ENCODE measurements at regions of chr13 and their contacts with region 1.

Region 1: DNA sequence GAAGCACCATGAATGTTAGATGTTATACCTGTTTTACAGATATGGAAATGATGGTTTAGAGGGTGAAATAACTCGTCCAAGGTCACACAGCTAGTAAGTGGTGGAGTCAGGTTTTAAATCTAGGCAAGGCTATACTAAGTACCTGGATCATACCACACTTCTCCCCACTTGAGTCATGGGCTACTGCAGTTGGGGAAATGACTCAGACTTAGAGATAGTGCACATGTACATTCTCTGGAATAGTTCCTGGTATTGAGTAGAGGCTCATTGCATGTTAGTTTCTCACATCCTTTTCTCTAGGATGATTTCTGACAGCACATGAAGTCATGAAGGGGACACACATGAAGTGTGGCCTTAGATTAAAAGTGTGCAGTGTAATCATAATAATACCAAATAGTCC is 76.2 kb upstream of the TNFSF11 start:
- DNase-seq: peak; percentile 12
- H3K4me3 Mint-ChIP-seq: no peak overlapping the region
- H3K27ac Mint-ChIP-seq: peak overlapping the region; percentile 86
- H3K4me1 Mint-ChIP-seq: peaks cover 54% of the 10 kb centered on the region
- H3K27me3 Mint-ChIP-seq: no peaks in the 10 kb centered on the region

Region 2: DNA sequence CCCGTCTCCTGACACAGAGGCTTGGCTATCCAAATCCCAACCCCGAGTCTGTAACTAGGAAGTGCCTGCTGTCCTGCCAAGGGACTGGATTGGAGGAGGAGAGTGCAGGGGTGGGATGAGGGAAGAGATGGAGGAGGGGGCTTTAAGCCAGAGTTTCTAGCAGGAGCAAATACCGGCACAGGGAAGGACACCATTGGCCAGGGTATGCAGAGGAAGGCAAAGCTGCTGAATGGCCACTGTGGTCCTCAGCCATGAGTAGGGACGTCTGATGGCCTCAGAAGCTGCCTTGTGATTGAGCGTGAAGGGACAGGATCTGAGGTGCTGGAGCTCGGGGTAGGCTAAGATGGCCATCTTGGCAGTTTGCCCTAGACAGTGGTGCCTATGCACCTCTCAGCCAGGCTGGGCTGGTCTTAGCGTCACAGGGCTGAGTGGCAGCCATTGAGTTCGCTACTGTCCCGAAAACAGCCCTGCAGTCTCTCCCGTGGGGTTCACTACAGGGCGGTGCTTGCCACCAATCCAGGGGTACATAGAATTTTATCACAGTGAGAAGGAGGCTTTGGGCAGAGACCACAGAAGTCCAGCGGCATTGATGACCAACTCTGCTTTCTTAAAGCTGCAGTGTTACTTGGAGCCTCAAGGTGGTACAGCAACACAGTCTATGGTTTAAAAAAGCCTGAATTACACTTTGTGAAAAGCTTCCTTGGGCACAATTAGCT is 164.0 kb before region 1 on chr13:
- intact Hi-C with region 1: loop called (anchors 1 kb)
- DNase-seq: no peak
- H3K4me3 Mint-ChIP-seq: no peak overlapping the region
- H3K27ac Mint-ChIP-seq: peak overlapping the region; percentile 6
- H3K4me1 Mint-ChIP-seq: peaks cover 51% of the 10 kb centered on the region
- H3K27me3 Mint-ChIP-seq: no peaks in the 10 kb centered on the region

Region 3: GRCh38 chr13:42377640-42378382 is 120.0 kb before region 1 on chr13:
- intact Hi-C with region 1: loop called (anchors 1 kb)
- DNase-seq: peak; percentile 68
- H3K4me3 Mint-ChIP-seq: peak overlapping the region; percentile 38
- H3K27ac Mint-ChIP-seq: peak overlapping the region; percentile 89
- H3K4me1 Mint-ChIP-seq: peaks cover 82% of the 10 kb centered on the region
- H3K27me3 Mint-ChIP-seq: no peaks in the 10 kb centered on the region

Region 4: GRCh38 chr13:42405665-42406390 is 92.0 kb before region 1 on chr13:
- intact Hi-C with region 1: loop called (anchors 1 kb)
- DNase-seq: no peak
- H3K4me3 Mint-ChIP-seq: peak overlapping the region; percentile 60
- H3K27ac Mint-ChIP-seq: peak overlapping the region; percentile 96
- H3K4me1 Mint-ChIP-seq: peaks cover 60% of the 10 kb centered on the region
- H3K27me3 Mint-ChIP-seq: no peaks in the 10 kb centered on the region

Region 5: DNA sequence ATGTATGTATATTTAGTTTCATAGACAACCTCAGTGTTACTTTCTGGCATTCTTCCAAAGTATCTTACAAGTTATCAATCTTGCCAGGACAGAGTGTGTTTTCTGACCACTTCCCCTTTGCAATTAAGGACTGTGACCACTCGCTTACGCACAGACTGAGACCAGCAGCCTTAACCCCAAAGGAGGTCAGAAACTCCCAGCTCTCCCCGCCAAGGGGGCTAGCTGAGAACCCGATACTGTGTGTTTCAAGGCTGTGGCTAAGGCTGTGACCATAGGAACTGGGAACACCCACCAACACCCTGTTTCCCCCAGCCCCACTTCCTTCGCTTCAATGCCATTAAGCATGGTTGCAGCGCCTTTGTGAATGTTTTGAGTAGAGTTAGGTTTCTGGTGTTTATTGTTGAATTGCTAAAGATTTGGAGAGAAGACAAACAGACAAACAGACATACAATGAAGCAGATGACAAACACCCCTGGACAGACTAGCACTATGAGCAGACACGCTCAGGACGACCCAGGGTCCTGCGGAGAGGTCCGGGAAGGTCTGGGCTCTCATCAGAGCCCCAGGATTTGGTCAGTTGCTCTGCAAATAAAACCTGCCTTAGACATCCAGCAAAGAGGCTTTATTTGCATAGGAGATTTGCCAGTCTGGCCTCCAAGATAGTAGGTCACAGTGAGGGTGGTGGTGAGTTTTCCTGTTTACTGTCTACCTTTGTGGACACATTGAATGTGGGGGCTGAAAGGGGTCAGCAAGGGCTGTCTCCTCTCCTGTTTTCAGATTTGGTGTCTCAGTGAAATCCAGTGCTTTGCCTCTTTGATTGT is 51.1 kb after region 1 on chr13:
- intact Hi-C with region 1: loop called (anchors 5 kb)
- DNase-seq: no peak
- H3K4me3 Mint-ChIP-seq: no peak overlapping the region
- H3K27ac Mint-ChIP-seq: no peak overlapping the region
- H3K4me1 Mint-ChIP-seq: peaks cover 6% of the 10 kb centered on the region
- H3K27me3 Mint-ChIP-seq: no peaks in the 10 kb centered on the region

Region 6: GRCh38 chr13:42803563-42804212 is 305.9 kb after region 1 on chr13:
- intact Hi-C with region 1: loop called (anchors 5 kb)
- DNase-seq: no peak
- H3K4me3 Mint-ChIP-seq: no peak overlapping the region
- H3K27ac Mint-ChIP-seq: no peak overlapping the region
- H3K4me1 Mint-ChIP-seq: no peaks in the 10 kb centered on the region
- H3K27me3 Mint-ChIP-seq: peaks cover 7% of the 10 kb centered on the region

Region 7: DNA sequence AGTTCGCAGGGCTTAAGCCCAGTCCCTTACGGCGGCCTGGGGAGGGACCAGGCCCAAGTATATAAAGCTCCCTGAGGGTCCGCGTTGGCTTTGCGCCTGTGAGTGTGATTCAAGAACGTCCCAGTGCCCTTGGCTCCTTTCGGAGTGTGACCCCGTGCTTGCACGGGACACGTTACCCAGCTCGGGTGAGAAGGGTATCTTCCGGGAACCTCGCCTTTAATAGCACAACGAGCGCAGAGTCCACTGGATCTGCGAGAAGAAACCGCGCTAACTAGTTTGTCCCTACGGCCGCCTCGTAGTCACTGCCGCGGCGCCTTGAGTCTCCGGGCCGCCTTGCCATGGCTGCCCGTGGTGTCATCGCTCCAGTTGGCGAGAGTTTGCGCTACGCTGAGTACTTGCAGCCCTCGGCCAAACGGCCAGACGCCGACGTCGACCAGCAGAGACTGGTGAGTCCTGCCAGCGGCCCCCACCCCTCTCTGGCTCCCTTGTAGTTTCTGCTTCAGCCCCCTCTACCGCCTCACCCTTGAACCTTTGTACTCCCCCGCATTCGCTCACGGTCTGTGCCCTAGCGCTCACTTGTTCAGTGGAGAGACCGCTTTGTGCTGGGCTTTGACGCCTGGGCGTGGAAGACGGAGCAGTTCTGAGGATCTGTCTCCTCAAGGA is 525.6 kb after region 1 on chr13 and contains the start of gene DNAJC15:
- intact Hi-C with region 1: loop called (anchors 10 kb)
- DNase-seq: peak; percentile 78
- H3K4me3 Mint-ChIP-seq: peak within 1 kb of the TSS; percentile 96
- H3K27ac Mint-ChIP-seq: peak within 1 kb of the TSS; percentile 89
- H3K4me1 Mint-ChIP-seq: peaks cover 30% of the 10 kb centered on the region
- H3K27me3 Mint-ChIP-seq: no peaks in the 10 kb centered on the region
- total RNA-seq, gene DNAJC15: 18.5 and 20.5 TPM in 2 replicates